ENCODE measurements at regions of chr4 and their contacts with region 1.

Region 1: DNA sequence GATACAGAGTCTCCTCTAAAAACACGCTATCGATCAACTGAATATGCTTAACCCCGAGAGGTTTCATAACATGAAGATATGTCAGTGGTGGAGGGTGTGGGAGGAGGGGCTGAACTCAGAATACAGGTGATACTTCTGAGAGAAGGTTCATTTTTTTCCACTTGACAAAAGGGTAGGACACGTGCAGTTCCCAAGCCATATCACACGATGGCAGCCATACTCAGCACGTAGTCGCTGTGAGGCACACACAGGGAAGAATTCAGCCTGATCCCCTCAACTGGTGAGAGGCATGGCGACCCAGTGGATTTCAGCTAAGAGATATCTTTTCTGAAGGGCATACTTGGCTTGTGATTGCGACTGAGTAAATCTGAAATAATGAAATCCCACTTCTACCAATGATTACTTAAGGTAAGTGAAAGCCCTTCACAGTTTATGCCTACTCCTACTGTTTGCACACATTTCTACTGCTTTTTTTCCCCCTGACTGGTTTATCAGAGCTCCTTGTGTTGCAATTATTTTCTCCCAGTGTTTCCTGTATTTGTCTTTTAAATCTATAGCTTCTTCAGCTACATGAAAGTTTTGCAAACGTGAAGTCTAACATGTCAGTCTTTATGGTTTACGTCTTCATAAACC is 133.1 kb downstream of the CORIN start:
- DNase-seq: peak; percentile 58
- ATAC-seq: peak; percentile 100
- H3K4me3 ChIP-seq: peak overlapping the region in 2 of 3 experiments; percentile 13 to 20; a peak in 3 of 6 replicates
- H3K27ac ChIP-seq: no peak overlapping the region
- H3K4me1 ChIP-seq: peaks cover 23% of the 10 kb centered on the region
- H3K27me3 ChIP-seq: peaks cover 0 to 1% of the 10 kb centered on the region in 2 experiments; a peak in 1 of 5 replicates
- CTCF ChIP-seq: peak; percentile 89
- EP300 ChIP-seq: no peak
- POLR2A ChIP-seq: no peak
- RAD21 ChIP-seq: peak; percentile 72

Region 2: GRCh38 chr4:47525154-47525819 is 179.5 kb before region 1 on chr4:
- CTCF ChIA-PET with region 1: no interaction called
- POLR2A ChIA-PET with region 1: no interaction called
- in situ Hi-C with region 1: no loop called
- intact Hi-C with region 1: no loop called
- DNase-seq: no peak
- ATAC-seq: no peak
- H3K4me3 ChIP-seq: no peak overlapping the region
- H3K27ac ChIP-seq: no peak overlapping the region
- H3K4me1 ChIP-seq: no peaks in the 10 kb centered on the region
- H3K27me3 ChIP-seq: no peaks in the 10 kb centered on the region; a peak in 1 of 5 replicates
- CTCF ChIP-seq: no peak
- EP300 ChIP-seq: no peak
- POLR2A ChIP-seq: no peak
- RAD21 ChIP-seq: no peak

Region 3: DNA sequence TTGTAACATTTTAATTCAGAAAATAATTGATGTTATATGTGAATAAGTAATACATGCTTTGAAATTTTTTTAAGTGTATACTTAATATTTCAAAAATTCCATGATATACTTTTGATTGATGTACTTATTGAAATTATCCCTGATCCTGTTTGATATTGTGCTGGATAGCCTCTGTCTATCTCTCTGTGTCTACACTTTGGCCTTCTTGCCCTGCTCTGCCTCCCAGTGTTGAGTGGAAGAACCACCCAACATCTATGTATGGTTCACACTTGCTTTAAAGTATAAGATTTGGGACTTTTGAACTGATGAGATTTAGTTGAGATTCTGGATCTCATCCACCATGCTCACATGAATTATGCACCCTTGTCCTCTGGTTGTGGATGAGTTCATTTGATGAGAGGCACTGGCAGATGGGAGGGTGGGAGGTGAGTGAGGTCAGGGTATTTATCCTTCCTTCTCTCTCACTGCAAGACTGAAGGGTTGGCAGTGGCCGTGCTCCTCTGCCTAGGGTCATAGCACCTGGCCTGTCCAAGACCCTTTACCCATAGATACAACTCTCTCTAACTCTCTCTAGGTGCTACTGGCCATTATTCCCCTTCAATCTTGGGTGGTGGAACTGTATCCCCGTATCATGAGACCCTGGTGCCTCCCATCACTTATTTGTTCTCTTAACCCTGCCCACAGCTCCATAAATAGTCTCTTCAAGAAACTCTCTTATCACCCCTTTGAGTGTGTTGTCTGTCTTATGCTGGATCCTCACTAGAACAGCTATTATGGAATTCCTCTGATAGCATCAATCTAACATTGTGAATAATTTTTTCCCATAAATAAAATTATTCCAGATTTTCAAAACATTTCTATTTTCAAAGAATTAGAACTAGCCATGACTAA is 57.8 kb after region 1 on chr4:
- CTCF ChIA-PET with region 1: no interaction called
- POLR2A ChIA-PET with region 1: no interaction called
- in situ Hi-C with region 1: no loop called
- intact Hi-C with region 1: loop called (anchors 1 kb)
- DNase-seq: no peak
- ATAC-seq: peak; percentile 46; the same call in 2 of the 3 replicates
- H3K4me3 ChIP-seq: no peak overlapping the region
- H3K27ac ChIP-seq: no peak overlapping the region
- H3K4me1 ChIP-seq: no peaks in the 10 kb centered on the region
- H3K27me3 ChIP-seq: no peaks in the 10 kb centered on the region
- CTCF ChIP-seq: 0 out of 2 replicates have a peak, but pooled peaks have one; percentile 27
- EP300 ChIP-seq: no peak
- POLR2A ChIP-seq: no peak
- RAD21 ChIP-seq: no peak

Region 4: GRCh38 chr4:47926639-47927258 is 221.9 kb after region 1 on chr4:
- CTCF ChIA-PET with region 1: interaction called, 3 read pairs
- POLR2A ChIA-PET with region 1: no interaction called
- in situ Hi-C with region 1: no loop called
- intact Hi-C with region 1: loop called (anchors 2 kb)
- DNase-seq: peak; percentile 61
- ATAC-seq: peak; percentile 100
- H3K4me3 ChIP-seq: peak overlapping the region; percentile 3 to 64 (median 24); a peak in 3 of 6 replicates
- H3K27ac ChIP-seq: no peak overlapping the region
- H3K4me1 ChIP-seq: peaks cover 14% of the 10 kb centered on the region
- H3K27me3 ChIP-seq: no peaks in the 10 kb centered on the region
- CTCF ChIP-seq: peak; percentile 89
- EP300 ChIP-seq: no peak
- POLR2A ChIP-seq: no peak
- RAD21 ChIP-seq: 0 out of 2 replicates have a peak, but pooled peaks have one; percentile 11

Region 5: DNA sequence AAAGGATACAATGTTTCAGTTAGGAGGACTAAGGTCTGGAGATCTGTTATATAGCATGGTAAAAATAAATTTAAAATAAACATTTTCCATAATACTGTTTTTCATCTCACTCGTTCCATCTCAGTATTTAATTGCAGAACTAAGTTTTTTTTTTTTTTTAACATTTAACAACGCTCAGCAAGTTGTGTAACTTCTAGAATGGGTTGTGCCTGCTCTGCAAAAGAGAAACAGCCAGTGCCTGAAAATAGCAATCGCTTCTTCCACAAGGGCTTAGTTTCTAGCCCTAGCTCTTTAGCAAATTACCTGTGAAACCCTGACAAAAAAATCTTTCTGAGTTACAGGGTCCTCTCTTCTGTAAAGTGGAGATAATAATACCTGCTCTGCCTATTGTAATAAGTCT is 269.8 kb after region 1 on chr4:
- CTCF ChIA-PET with region 1: no interaction called
- POLR2A ChIA-PET with region 1: no interaction called
- in situ Hi-C with region 1: no loop called
- intact Hi-C with region 1: no loop called
- DNase-seq: no peak
- ATAC-seq: no peak
- H3K4me3 ChIP-seq: no peak overlapping the region
- H3K27ac ChIP-seq: no peak overlapping the region
- H3K4me1 ChIP-seq: no peaks in the 10 kb centered on the region
- H3K27me3 ChIP-seq: no peaks in the 10 kb centered on the region
- CTCF ChIP-seq: no peak
- EP300 ChIP-seq: no peak
- POLR2A ChIP-seq: no peak
- RAD21 ChIP-seq: no peak

Region 6: DNA sequence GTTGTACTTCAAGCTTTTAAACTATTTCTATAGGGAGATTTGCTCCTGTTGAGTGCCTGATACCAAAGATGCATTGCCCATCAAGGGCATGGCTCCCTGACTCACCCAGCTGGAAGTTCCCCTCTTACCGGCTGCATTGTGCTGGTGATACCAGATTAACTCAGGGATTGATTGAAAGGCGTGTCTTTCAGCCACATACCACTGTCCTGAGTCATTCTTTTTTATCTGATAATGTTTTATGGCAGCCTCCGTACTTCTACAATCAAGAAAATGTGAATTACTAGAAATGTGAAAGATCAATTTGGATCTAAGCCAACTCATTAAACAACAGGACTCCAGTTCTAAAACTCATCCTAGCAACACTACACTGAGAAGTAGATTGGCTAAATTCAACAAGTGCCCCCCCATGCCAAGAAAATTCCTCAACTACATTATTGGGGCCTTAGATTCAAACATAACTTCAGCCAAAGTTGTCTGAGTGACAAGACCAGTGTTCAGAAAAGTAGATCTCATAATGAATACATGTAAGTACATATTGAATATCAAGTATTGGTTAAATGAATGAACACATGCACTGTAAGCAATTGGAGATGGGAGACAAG is 389.2 kb after region 1 on chr4:
- CTCF ChIA-PET with region 1: no interaction called
- POLR2A ChIA-PET with region 1: no interaction called
- in situ Hi-C with region 1: loop called (anchors 25 kb)
- intact Hi-C with region 1: no loop called
- DNase-seq: no peak
- ATAC-seq: no peak
- H3K4me3 ChIP-seq: no peak overlapping the region
- H3K27ac ChIP-seq: no peak overlapping the region
- H3K4me1 ChIP-seq: no peaks in the 10 kb centered on the region
- H3K27me3 ChIP-seq: no peaks in the 10 kb centered on the region
- CTCF ChIP-seq: no peak
- EP300 ChIP-seq: no peak
- POLR2A ChIP-seq: no peak
- RAD21 ChIP-seq: no peak